SK-N-SH (cell line): ENCODE measurements at regions of chr11 and their contacts with region 1.

Region 1: GRCh38 chr11:57530596-57531507 is at the start of gene TIMM10:
- DNase-seq: peak; percentile 88
- H3K4me3 ChIP-seq: peak within 1 kb of the TSS; percentile 83 to 95
- H3K27ac ChIP-seq: peak within 1 kb of the TSS; percentile 11 to 71; a peak in 3 of 4 replicates
- H3K4me1 ChIP-seq: peaks cover 0 to 9% of the 10 kb centered on the region in 2 experiments; a peak in 2 of 4 replicates
- H3K27me3 ChIP-seq: no peaks in the 10 kb centered on the region
- CTCF ChIP-seq: no peak
- EP300 ChIP-seq: peak in 1 of 2 experiments; percentile 33; a peak in 1 of 4 replicates
- RAD21 ChIP-seq: 0 out of 2 replicates have a peak, but pooled peaks have one; percentile 9
- polyA plus RNA-seq, gene TIMM10: 179 and 189 TPM in 2 replicates

Region 2: DNA sequence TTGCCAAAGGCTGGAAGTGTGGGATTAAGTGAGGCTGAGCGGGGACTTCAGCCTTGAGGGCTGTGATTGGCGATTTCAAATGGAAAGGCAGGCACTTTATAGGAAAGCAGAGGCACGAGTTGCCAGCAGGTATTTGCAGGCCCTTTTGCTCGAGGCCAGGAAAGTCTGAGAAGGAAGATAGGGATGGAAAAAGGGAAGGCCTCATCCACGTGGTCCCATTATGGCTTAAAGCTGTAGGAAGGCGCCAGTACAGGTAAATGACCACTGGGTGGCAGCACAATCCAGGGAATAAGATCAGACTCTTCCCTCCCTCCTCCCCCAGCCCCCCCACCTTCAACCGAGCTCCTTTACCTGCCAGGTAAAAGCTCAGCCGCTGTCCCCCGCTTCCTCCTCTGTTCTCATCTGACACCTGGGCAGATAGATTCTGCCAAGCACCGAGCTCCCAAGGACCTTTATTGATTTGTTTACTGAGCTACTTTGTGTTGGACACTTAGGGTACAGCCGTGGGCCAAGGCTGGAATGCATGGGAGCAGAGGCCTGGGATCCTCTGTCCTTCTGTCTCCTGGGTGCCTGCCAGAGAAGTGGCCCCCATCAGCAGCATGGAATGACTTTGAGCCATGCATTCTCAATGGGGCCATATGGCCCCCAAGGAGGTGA is 185.2 kb before region 1 on chr11:
- CTCF ChIA-PET with region 1: interaction called, 24 read pairs
- POLR2A ChIA-PET with region 1: no interaction called
- DNase-seq: peak; percentile 86
- H3K4me3 ChIP-seq: no peak overlapping the region; a peak in 1 of 4 replicates
- H3K27ac ChIP-seq: no peak overlapping the region; a peak in 1 of 4 replicates
- H3K4me1 ChIP-seq: peaks cover 0 to 2% of the 10 kb centered on the region in 2 experiments; a peak in 1 of 4 replicates
- H3K27me3 ChIP-seq: no peaks in the 10 kb centered on the region
- CTCF ChIP-seq: peak; percentile 68
- EP300 ChIP-seq: no peak
- RAD21 ChIP-seq: peak; percentile 75

Region 3: DNA sequence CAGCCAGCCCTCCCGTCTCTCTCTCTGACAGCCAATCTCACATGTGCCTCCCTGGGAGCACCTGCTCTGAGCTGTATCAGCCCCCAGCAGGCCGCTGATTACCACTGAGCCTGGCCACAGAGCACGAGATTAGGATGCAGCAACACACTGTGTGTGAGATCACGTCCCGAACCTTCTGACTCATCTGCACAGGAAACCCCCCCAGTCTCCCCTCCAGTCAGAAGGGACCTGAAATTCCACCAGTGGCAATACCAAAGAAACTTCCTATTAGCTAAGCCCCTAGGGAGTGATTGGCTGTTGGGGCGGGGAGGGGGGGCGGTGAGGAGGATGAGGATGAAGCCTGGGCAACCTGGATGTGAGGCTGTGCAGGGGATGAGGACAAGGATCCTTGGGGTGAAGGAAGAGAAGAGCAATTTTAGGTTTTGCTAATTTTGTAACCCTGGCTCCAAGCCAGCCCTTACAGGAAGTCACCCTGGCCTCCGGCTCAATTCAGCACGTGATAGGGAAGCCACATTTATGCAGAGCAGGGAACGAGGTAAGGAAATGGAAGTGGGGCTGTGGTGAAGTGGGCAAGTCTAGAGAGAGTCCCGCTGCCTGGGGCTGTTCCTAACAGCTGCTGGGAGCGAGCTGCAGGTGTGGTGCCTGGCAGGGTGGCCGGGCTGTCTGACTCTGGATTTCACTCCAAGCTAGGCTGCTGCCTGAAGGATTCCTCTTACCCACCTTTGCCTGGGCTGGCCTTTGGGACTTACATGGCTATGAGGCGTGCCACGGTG is 105.9 kb before region 1 on chr11:
- CTCF ChIA-PET with region 1: no interaction called
- POLR2A ChIA-PET with region 1: no interaction called
- DNase-seq: no peak
- H3K4me3 ChIP-seq: no peak overlapping the region
- H3K27ac ChIP-seq: no peak overlapping the region
- H3K4me1 ChIP-seq: peaks cover 23 to 24% of the 10 kb centered on the region in 2 experiments; a peak in 2 of 4 replicates
- H3K27me3 ChIP-seq: no peaks in the 10 kb centered on the region; the same call in 1 of the 2 replicates
- CTCF ChIP-seq: no peak
- EP300 ChIP-seq: 0 out of 4 replicates have a peak, but pooled peaks of 1 of the 2 experiments have one; percentile 12
- RAD21 ChIP-seq: no peak

Region 4: GRCh38 chr11:57463671-57464538 is 66.9 kb before region 1 on chr11:
- CTCF ChIA-PET with region 1: interaction called, 174 read pairs
- POLR2A ChIA-PET with region 1: no interaction called
- DNase-seq: no peak
- H3K4me3 ChIP-seq: no peak overlapping the region
- H3K27ac ChIP-seq: no peak overlapping the region
- H3K4me1 ChIP-seq: peaks cover 11 to 15% of the 10 kb centered on the region in 2 experiments; a peak in 2 of 4 replicates
- H3K27me3 ChIP-seq: peaks cover 21% of the 10 kb centered on the region
- CTCF ChIP-seq: no peak
- EP300 ChIP-seq: no peak
- RAD21 ChIP-seq: no peak

Region 5: GRCh38 chr11:57474017-57474802 is 56.6 kb before region 1 on chr11:
- CTCF ChIA-PET with region 1: interaction called, 517 read pairs
- POLR2A ChIA-PET with region 1: no interaction called
- DNase-seq: peak; percentile 37
- H3K4me3 ChIP-seq: no peak overlapping the region
- H3K27ac ChIP-seq: no peak overlapping the region
- H3K4me1 ChIP-seq: peaks cover 0 to 8% of the 10 kb centered on the region in 2 experiments; a peak in 1 of 4 replicates
- H3K27me3 ChIP-seq: 0 out of 2 replicates have a peak, but pooled peaks cover 4% of the 10 kb centered on the region
- CTCF ChIP-seq: no peak
- EP300 ChIP-seq: no peak
- RAD21 ChIP-seq: no peak

Region 6: DNA sequence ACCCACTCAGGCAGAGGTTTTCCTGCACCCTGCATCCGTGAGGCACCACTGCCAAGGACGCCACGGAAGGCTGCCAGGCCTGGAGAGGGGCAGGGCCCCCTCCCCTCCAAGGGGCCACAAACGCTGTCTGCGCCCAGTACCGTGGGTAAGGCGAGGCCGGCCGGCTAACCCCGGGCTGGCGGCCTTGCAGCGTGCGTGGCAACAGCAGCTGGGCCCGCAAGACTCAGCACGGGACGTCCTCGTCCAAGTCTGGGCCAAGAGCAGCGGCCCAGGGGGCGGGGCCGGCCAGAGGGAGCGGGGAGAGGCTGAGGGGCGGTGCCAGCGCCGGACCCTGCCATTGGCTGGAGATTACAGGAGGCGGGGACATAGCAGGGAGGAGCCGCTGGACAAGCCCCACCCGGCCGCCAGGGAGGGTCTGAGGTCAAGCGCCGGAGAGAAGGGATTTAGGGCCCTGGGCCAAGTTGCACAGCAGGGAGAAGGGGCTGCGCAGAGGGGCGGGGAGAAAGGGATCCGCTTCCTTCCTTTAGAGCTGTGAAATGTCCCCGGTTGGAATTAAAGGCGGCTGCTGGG is 31.4 kb before region 1 on chr11:
- CTCF ChIA-PET with region 1: interaction called, 517 read pairs
- POLR2A ChIA-PET with region 1: no interaction called
- DNase-seq: peak; percentile 100
- H3K4me3 ChIP-seq: peak overlapping the region; percentile 30 to 36; a peak in 3 of 4 replicates
- H3K27ac ChIP-seq: peak overlapping the region in 1 of 2 experiments; percentile 51; a peak in 1 of 4 replicates
- H3K4me1 ChIP-seq: peaks cover 11 to 12% of the 10 kb centered on the region in 2 experiments; a peak in 2 of 4 replicates
- H3K27me3 ChIP-seq: no peaks in the 10 kb centered on the region
- CTCF ChIP-seq: no peak
- EP300 ChIP-seq: no peak
- RAD21 ChIP-seq: no peak

Region 7: DNA sequence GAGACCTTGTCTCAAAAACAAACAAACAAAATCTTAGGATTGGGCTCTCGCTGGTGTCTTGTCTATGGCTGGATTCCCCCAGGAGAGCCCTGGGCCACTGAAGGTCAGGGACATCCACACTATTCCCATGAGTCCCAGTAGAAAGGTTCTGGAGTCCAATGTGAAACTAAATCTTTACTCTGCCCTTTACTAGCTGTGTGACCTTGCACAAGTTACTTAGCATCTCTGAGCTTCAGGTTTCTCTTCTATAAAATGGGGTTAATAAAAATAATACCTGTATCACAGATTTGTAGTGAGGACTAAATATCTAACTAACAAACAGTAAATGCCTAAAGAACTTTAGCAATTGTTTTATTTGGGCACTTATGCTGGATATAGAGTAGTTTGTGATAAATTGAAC is 24.3 kb before region 1 on chr11:
- CTCF ChIA-PET with region 1: interaction called, 517 read pairs
- POLR2A ChIA-PET with region 1: no interaction called
- DNase-seq: no peak
- H3K4me3 ChIP-seq: no peak overlapping the region
- H3K27ac ChIP-seq: no peak overlapping the region
- H3K4me1 ChIP-seq: no peaks in the 10 kb centered on the region
- H3K27me3 ChIP-seq: no peaks in the 10 kb centered on the region
- CTCF ChIP-seq: no peak
- EP300 ChIP-seq: no peak
- RAD21 ChIP-seq: no peak

Region 8: GRCh38 chr11:57515332-57516060 is 15.4 kb before region 1 on chr11 and contains the start of gene SLC43A1:
- CTCF ChIA-PET with region 1: interaction called, 106 read pairs
- POLR2A ChIA-PET with region 1: interaction called, 3 read pairs
- DNase-seq: peak; percentile 74
- H3K4me3 ChIP-seq: peak within 1 kb of the TSS; percentile 69 to 78
- H3K27ac ChIP-seq: no peak within 1 kb of the TSS; a peak in 1 of 4 replicates
- H3K4me1 ChIP-seq: peaks cover 0 to 9% of the 10 kb centered on the region in 2 experiments; a peak in 1 of 4 replicates
- H3K27me3 ChIP-seq: no peaks in the 10 kb centered on the region
- CTCF ChIP-seq: no peak
- EP300 ChIP-seq: no peak
- RAD21 ChIP-seq: no peak
- polyA plus RNA-seq, gene SLC43A1: 3.7 and 4.4 TPM in 2 replicates